ENCODE measurements at regions of chr6 and their contacts with region 1.

Region 1: DNA sequence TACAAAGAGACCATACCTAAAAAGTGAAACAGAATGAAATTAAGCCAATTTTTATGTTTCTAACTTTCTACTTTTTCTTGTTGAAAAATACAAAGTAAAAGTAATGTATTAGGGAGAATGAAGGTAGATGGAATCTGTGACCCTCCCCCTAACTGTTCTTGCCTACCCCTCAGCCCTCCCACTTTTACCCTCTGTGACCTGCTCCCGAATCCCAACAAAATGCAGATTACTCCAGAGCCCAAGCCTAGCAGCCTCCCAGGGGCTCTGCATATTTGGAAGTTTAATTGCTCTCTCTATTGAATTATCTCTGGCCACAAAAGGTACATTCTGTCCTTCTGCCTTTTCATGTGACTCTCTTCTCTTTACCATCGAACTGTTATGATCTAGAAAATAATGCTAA is 201.5 kb downstream of the PKHD1 start:
- DNase-seq: no peak
- ATAC-seq: no peak
- H3K4me3 ChIP-seq: no peak overlapping the region
- H3K4me3 Mint-ChIP-seq: no peak overlapping the region
- H3K27ac ChIP-seq: no peak overlapping the region
- H3K27ac Mint-ChIP-seq: no peak overlapping the region
- H3K4me1 ChIP-seq: no peaks in the 10 kb centered on the region
- H3K4me1 Mint-ChIP-seq: no peaks in the 10 kb centered on the region
- H3K27me3 ChIP-seq: no peaks in the 10 kb centered on the region
- H3K27me3 Mint-ChIP-seq: no peaks in the 10 kb centered on the region
- CTCF ChIP-seq: no peak

Region 2: GRCh38 chr6:51182827-51183226 is 703.1 kb before region 1 on chr6:
- CTCF ChIA-PET with region 1: no interaction called
- POLR2A ChIA-PET with region 1: no interaction called
- intact Hi-C with region 1: loop called in 1 of 2 experiments (anchors 5 kb)
- DNase-seq: no peak
- ATAC-seq: no peak
- H3K4me3 ChIP-seq: no peak overlapping the region
- H3K4me3 Mint-ChIP-seq: no peak overlapping the region
- H3K27ac ChIP-seq: no peak overlapping the region
- H3K27ac Mint-ChIP-seq: no peak overlapping the region
- H3K4me1 ChIP-seq: no peaks in the 10 kb centered on the region
- H3K4me1 Mint-ChIP-seq: no peaks in the 10 kb centered on the region
- H3K27me3 ChIP-seq: no peaks in the 10 kb centered on the region
- H3K27me3 Mint-ChIP-seq: no peaks in the 10 kb centered on the region
- CTCF ChIP-seq: no peak

Region 3: DNA sequence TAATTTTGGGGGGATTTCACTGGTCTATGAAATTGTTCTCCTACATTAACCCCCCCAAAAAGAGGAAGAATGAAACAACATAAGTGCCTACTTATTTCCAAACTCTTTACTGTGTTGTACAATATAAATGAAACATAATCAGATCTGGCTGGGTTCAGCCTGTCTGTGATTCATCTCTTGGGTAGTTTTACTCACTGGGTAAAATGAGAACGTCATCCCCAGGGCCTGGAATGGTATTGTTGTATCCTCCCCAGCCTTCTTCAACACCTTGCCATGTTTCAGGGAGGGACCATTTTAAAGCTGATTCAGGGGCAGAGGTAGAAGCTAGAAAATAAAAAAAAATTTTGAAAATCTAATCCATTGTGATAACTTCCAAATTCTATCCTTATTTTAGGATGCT is 55.3 kb before region 1 on chr6:
- CTCF ChIA-PET with region 1: no interaction called
- POLR2A ChIA-PET with region 1: no interaction called
- intact Hi-C with region 1: no loop called
- DNase-seq: no peak
- ATAC-seq: no peak
- H3K4me3 ChIP-seq: no peak overlapping the region
- H3K4me3 Mint-ChIP-seq: no peak overlapping the region
- H3K27ac ChIP-seq: no peak overlapping the region
- H3K27ac Mint-ChIP-seq: no peak overlapping the region
- H3K4me1 ChIP-seq: no peaks in the 10 kb centered on the region
- H3K4me1 Mint-ChIP-seq: no peaks in the 10 kb centered on the region
- H3K27me3 ChIP-seq: no peaks in the 10 kb centered on the region
- H3K27me3 Mint-ChIP-seq: peaks cover 4% of the 10 kb centered on the region
- CTCF ChIP-seq: no peak

Region 4: DNA sequence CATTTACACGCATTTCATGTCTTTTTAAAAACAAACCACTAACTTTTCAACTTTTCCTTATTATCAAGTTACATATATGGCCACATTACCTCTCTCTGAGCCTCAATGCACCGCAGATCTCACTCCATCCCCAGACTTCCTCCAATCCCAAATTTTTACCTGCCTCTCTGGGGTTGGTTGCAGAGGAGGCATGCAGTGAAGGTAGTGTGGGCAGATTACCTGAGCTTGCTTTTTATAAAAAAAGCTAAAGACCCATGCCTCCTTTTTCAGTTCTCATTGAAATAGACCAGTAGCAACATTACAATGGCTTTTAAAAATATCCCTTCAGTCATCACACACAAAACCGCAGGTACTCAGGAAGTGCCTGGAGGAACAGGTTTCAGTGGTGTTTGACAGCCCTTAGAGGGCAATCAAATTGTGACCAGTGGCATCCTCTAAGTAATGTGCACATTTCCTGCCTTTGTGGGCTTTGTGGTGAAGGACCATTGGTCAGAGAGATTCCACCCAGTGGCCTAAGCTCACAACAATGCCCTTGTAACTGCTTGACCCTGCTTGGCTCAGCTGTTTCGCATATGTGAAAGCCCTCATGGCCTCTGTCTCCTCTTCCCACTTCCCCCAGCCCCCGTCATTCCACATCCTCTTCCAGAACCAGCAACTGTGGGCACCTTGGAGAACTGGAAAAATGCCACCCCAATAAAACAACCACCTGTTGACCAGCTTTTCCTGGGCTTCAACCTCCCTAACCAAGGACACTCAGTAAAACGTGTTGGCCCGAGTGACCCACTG is 270.0 kb after region 1 on chr6:
- CTCF ChIA-PET with region 1: no interaction called
- POLR2A ChIA-PET with region 1: no interaction called
- intact Hi-C with region 1: no loop called
- DNase-seq: no peak
- ATAC-seq: no peak
- H3K4me3 ChIP-seq: no peak overlapping the region
- H3K4me3 Mint-ChIP-seq: no peak overlapping the region
- H3K27ac ChIP-seq: no peak overlapping the region
- H3K27ac Mint-ChIP-seq: no peak overlapping the region
- H3K4me1 ChIP-seq: no peaks in the 10 kb centered on the region
- H3K4me1 Mint-ChIP-seq: no peaks in the 10 kb centered on the region
- H3K27me3 ChIP-seq: peaks cover 0 to 6% of the 10 kb centered on the region in 2 experiments
- H3K27me3 Mint-ChIP-seq: peaks cover 11% of the 10 kb centered on the region
- CTCF ChIP-seq: no peak

Region 5: GRCh38 chr6:52337633-52338290 is 451.8 kb after region 1 on chr6:
- CTCF ChIA-PET with region 1: no interaction called
- POLR2A ChIA-PET with region 1: no interaction called
- intact Hi-C with region 1: no loop called
- DNase-seq: no peak
- ATAC-seq: no peak
- H3K4me3 ChIP-seq: no peak overlapping the region
- H3K4me3 Mint-ChIP-seq: no peak overlapping the region
- H3K27ac ChIP-seq: no peak overlapping the region
- H3K27ac Mint-ChIP-seq: peak overlapping the region; percentile 87
- H3K4me1 ChIP-seq: peaks cover 37% of the 10 kb centered on the region
- H3K4me1 Mint-ChIP-seq: peaks cover 76% of the 10 kb centered on the region
- H3K27me3 ChIP-seq: no peaks in the 10 kb centered on the region
- H3K27me3 Mint-ChIP-seq: no peaks in the 10 kb centered on the region
- CTCF ChIP-seq: no peak